Posterior vena cava (tissue), 2 donors: ENCODE measurements at regions of chr17 and their contacts with region 1.

Region 1: GRCh38 chr17:69220098-69220497 is 8.5 kb downstream of the ABCA10 start:
- DNase-seq: no peak

Region 2: GRCh38 chr17:69117855-69118784 is 102.0 kb before region 1 on chr17:
- intact Hi-C with region 1: no loop called
- DNase-seq: no peak

Region 3: GRCh38 chr17:69170377-69170776 is 49.7 kb before region 1 on chr17:
- intact Hi-C with region 1: loop called in 1 of 2 experiments (anchors 2 kb)
- DNase-seq: no peak

Region 4: GRCh38 chr17:70295731-70296130 is 1075.6 kb after region 1 on chr17:
- intact Hi-C with region 1: no loop called
- DNase-seq: no peak